Upper lobe of right lung (tissue), 1 donor: ENCODE measurements at regions of chr19 and their contacts with region 1.

Region 1: DNA sequence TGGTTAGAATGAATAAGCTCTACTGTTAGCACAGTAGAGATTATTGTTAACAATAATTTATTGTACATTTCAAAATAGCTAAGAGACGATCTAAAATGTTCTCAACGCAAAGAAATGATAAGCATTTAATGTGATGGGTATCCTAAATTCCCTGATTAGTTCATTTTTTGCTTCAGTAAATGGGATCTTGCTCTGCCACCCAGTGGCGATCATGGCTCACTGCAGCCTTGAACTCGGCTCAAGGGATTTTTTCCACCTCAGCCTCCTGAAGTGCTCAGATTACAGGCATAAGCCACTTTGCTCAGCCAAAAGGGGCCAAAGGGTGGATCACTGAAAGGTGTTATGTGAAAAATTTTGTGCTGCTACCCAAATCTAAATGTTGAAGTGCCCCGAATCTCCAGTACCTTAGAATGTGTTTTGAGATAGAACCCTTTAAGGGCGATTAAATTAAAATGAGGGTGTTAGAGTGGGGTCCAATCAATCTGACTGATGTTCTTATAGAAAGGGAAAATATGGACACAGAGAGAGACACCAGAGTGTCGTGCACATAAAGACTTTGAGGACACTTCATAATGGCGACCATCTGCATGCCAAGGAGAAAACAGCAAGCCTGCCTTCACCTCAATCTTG is 31.5 kb upstream of the ZNF766 start:
- DNase-seq: no peak
- ATAC-seq: peak; percentile 95
- H3K4me3 ChIP-seq: no peak overlapping the region
- H3K27ac ChIP-seq: no peak overlapping the region
- H3K4me1 ChIP-seq: no peaks in the 10 kb centered on the region
- H3K27me3 ChIP-seq: no peaks in the 10 kb centered on the region
- CTCF ChIP-seq: peak; percentile 94

Region 2: DNA sequence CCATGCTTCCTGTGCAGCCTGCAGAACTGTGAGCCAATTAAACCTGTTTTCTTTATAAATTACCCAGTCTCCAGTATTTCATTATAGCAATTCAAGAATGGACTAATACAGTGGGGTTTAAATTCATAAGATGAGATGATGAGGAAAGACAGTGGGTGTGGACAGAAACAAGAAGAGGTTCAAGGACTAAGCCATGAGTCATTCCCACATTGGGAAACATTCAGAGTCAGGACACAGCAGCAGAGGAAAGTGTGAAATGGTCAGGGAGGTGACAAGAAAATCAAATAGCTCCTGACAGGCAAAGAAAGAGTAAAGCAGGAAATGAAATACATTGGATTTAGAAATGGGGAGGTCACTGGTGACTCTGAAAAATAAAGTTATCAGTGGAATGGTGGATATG is 151.4 kb before region 1 on chr19:
- intact Hi-C with region 1: no loop called
- DNase-seq: no peak
- ATAC-seq: no peak
- H3K4me3 ChIP-seq: no peak overlapping the region
- H3K27ac ChIP-seq: no peak overlapping the region
- H3K4me1 ChIP-seq: no peaks in the 10 kb centered on the region
- H3K27me3 ChIP-seq: no peaks in the 10 kb centered on the region
- CTCF ChIP-seq: no peak

Region 3: GRCh38 chr19:52139252-52140031 is 98.4 kb before region 1 on chr19 and contains the start of gene ZNF616:
- intact Hi-C with region 1: loop called (anchors 5 kb)
- DNase-seq: peak; percentile 99
- ATAC-seq: peak; percentile 94
- H3K4me3 ChIP-seq: peak within 1 kb of the TSS; percentile 89
- H3K27ac ChIP-seq: peak within 1 kb of the TSS; percentile 93
- H3K4me1 ChIP-seq: peaks cover 15% of the 10 kb centered on the region
- H3K27me3 ChIP-seq: no peaks in the 10 kb centered on the region
- CTCF ChIP-seq: peak; percentile 78
- total RNA-seq, gene ZNF616: 9.5 TPM

Region 4: DNA sequence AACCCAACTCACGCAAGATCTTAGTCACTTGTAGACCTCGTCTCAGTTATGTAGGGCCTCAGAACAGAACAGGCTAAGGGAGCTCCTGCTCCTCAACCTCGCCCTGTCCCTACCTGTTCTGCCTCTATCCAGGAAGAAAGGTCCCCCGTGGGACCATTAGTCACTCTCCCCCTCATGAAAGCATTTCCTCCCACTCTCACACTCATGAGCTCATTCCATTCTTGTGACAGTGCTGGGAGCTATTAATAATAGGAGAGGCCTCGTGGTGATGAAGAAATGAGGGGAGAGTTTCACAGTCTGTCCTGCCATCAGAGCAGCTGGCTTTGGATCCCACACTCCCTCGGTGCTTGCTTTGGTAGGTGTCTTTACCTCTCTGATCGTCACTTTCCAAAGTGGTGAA is 37.8 kb before region 1 on chr19:
- intact Hi-C with region 1: no loop called
- DNase-seq: no peak
- ATAC-seq: peak; percentile 64
- H3K4me3 ChIP-seq: no peak overlapping the region
- H3K27ac ChIP-seq: no peak overlapping the region
- H3K4me1 ChIP-seq: peaks cover 10% of the 10 kb centered on the region
- H3K27me3 ChIP-seq: no peaks in the 10 kb centered on the region
- CTCF ChIP-seq: no peak

Region 5: GRCh38 chr19:52336117-52336790 is 98.4 kb after region 1 on chr19 and contains the start of gene ZNF610:
- intact Hi-C with region 1: no loop called
- DNase-seq: peak; percentile 94
- ATAC-seq: peak; percentile 99
- H3K4me3 ChIP-seq: peak within 1 kb of the TSS; percentile 84
- H3K27ac ChIP-seq: peak within 1 kb of the TSS; percentile 90
- H3K4me1 ChIP-seq: peaks cover 4% of the 10 kb centered on the region
- H3K27me3 ChIP-seq: no peaks in the 10 kb centered on the region
- CTCF ChIP-seq: no peak
- total RNA-seq, gene ZNF610: 2.5 TPM